ENCODE measurements at regions of chr5 and their contacts with region 1.

Region 1: DNA sequence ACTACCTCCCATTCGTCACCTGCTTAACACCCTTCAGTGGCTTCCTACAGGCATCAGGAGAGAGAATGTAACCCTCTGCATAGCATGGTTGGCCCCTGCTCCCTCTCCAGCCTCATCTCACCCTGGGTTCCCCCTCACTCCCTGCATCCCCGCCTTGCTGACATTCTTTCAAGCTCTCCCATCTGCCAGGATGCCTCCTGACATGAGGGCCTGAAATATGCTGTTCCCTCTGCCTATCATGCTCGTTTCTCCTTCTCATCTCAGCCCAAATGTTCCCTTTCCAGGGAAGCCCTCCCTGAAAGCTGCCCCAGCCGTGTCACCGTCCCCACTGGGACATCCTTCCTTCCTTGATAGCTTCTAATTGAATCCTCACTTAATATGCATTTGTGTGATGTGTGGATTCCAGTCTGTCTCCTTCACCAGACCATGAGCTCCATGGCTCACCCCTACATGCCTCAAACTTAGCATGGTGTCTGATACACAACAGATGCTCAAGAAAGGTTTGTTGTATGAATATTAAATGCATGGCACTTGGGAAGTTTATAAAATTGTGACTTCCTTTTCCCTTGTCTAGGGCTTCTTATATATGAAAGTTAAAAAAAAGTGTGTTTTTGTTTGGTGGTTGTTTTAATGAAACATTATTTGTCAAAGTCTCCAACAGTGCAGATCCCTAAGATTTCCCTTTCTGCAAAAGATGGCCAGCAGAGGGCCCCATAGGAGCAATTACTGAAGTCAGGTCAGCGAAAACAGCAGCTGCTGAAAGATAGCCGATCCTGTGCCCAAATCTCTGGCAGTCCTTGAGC is 7.3 kb upstream of the C5orf58 start:
- DNase-seq: peak; percentile 84

Region 2: DNA sequence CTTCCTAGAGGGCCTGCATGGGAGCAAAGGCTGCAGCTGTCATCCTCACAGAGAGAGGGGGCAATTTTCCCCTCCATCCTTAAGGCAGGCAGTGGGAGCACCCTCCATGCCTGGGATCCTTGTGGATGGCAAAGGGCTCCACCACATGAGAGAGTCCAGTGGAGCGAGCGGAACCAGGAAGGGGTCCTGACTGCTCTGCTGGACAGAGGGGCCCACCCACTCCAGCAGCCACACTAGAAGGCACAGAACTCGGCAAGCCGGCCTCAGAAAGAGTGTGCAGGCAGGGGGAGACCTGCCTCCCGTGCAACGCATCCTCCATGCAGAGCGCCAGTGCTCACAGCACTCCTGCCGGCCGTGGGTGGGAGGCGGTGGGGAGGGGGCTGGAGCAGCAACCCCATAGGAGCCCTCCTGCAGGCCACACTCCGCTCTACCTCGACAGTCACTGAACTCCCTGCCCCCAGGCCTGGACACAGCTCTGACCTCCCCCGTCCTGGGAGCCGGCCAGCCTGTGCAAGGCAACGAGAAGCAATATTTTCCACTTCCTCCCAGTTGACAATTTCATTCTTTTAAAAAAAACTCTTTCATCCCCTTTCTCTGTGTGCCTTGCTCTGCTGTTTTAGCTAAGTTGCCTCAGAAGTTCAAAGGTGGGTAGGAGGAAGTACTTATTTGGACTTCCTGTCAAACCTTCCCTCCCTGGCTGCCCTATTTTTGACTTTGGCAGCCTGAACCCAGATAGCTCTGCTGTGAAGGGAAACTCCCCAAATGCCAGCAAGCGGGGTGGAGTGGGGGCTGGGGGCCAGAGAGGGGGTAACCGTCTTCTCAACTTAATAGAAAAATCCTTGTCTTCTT is 77.3 kb after region 1 on chr5:
- intact Hi-C with region 1: no loop called
- DNase-seq: peak; percentile 92

Region 3: DNA sequence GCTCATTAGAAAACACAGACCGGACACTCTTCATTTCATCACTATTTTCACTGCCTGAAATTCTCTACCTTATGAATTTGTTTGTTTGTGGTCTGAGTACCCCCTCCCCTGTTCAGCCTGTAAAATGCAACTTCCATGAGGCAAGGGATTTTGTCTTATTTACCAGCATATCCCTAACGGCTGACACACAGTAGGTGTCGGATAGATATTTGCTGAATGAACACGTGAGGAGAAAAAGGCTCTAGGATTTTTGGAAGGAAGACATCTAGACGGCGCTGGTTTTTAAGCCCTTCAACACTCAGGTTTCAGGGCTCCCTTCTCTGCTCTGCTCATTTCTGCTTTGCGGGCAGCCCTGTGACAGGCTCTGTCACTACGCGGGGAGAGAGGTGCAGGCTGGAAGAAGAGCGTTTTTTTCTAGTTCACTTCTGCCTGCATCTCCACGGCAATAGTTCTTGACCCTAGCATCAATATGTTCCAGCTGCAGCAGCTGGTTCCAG is 122.7 kb after region 1 on chr5:
- intact Hi-C with region 1: loop called in 1 of 2 experiments (anchors 10 kb)
- DNase-seq: no peak

Region 4: DNA sequence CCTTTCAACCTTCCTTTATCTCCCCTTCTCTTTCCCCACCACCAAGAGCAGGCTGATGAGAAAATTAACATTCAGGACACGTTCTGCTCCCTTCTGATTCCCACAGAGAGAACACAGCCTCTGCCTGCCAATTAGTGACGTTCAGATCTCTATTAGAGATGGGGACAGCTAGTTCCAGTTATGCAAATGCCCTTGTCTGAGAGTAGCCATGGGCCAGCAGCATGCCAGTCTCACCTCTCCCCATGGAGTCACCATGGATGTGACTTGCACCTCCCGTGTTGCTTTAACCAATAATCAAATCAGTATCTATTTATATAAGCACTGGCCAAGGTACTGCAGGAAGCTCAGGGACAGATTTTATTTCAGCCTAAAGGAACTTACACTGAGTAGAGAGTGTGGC is 339.5 kb after region 1 on chr5:
- intact Hi-C with region 1: no loop called
- DNase-seq: no peak

Region 5: DNA sequence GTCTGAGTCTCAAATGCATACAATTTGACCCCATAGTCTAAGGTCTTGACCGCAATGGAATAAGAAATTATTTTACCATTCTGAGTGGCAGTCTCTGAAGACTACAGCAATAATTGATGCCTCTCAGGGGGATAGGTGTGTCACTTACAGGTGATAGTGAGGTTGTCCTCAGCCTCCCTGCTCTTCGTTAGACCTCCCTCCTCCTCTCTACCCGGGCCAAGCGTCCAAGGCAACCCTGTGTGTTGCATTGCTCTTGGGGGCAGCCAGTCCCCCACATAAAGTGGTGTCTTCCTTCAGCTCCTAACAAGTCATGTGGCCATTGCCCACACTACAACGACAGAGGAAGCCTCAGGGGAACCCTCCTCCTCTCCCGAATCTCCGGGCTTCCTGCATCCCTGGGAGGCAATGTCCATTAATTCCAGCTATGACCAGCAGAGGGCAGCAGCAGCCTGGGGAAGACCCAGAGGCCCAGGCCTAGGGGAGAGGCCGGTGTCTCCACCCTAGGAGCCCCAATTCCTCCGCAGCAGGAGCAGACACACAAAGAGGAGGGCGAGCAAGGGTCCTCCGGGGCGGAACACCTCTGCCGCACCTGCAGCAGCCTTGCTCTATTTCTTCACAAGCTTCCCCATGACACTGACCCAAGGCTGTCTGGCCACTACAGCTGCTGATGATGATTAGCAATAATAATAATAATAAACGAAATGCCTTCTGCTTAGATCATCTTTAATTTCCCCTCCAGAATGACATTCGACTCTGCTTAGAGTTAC is 413.1 kb after region 1 on chr5:
- intact Hi-C with region 1: loop called in 1 of 2 experiments (anchors 10 kb)
- DNase-seq: no peak